ENCODE measurements at regions of chr19 and their contacts with region 1.

Region 1: GRCh38 chr19:33373701-33374421 is at the start of gene CEBPG:
- DNase-seq: peak in 1 of 2 donors; percentile 67
- ATAC-seq: peak; percentile 68 to 73
- H3K4me3 ChIP-seq: peak within 1 kb of the TSS; percentile 63 to 88 (median 72)
- H3K27ac ChIP-seq: peak within 1 kb of the TSS; percentile 89 to 99 (median 94)
- H3K4me1 ChIP-seq: peaks cover 40 to 41% of the 10 kb centered on the region in 2 donors
- H3K27me3 ChIP-seq: no peaks in the 10 kb centered on the region
- CTCF ChIP-seq: peak; percentile 35 to 54 (median 51)
- POLR2A ChIP-seq: peak; percentile 93 to 94
- total RNA-seq, gene CEBPG: 44.2 to 50.1 (median 46.1) TPM

Region 2: GRCh38 chr19:33176670-33177416 is 197.0 kb before region 1 on chr19:
- in situ Hi-C with region 1: no loop called
- intact Hi-C with region 1: loop called (anchors 1 kb)
- DNase-seq: peak; percentile 89 to 96
- ATAC-seq: peak; percentile 96 to 97
- H3K4me3 ChIP-seq: peak overlapping the region; percentile 77 to 100 (median 84)
- H3K27ac ChIP-seq: peak overlapping the region; percentile 89 to 97 (median 92)
- H3K4me1 ChIP-seq: peaks cover 17 to 29% of the 10 kb centered on the region in 2 donors
- H3K27me3 ChIP-seq: no peaks in the 10 kb centered on the region
- CTCF ChIP-seq: peak; percentile 25 to 45 (median 32)
- POLR2A ChIP-seq: peak; percentile 77 to 79

Region 3: DNA sequence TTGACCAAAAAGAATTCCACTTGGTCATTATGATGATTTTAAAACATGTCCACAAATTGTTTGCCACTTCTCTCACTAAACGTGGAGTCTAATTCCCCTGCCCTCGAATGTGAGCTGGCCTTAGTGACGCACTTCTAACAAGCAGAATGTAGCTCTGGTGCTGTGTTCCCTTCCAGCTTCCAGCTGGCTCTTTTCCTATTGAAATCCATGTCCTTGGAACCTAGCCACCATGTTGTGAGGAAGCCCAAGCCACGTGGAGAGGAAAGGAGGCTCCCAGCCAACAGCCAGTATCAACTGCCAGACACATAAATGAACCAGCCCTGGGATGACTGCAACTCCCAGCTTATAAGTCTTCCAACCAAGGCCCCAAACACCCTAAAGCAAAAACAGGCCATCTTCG is 47.9 kb before region 1 on chr19:
- in situ Hi-C with region 1: no loop called
- intact Hi-C with region 1: loop called (anchors 2 kb)
- DNase-seq: peak; percentile 79 to 94
- ATAC-seq: peak; percentile 99
- H3K4me3 ChIP-seq: no peak overlapping the region
- H3K27ac ChIP-seq: peak overlapping the region; percentile 75 to 84 (median 79)
- H3K4me1 ChIP-seq: peaks cover 12 to 27% of the 10 kb centered on the region in 2 donors
- H3K27me3 ChIP-seq: no peaks in the 10 kb centered on the region
- CTCF ChIP-seq: no peak
- POLR2A ChIP-seq: no peak

Region 4: GRCh38 chr19:33350538-33351309 is 23.1 kb before region 1 on chr19:
- in situ Hi-C with region 1: no loop called
- intact Hi-C with region 1: no loop called
- DNase-seq: peak in 1 of 2 donors; percentile 64
- ATAC-seq: peak; percentile 50 to 84
- H3K4me3 ChIP-seq: no peak overlapping the region
- H3K27ac ChIP-seq: no peak overlapping the region
- H3K4me1 ChIP-seq: no peaks in the 10 kb centered on the region
- H3K27me3 ChIP-seq: peaks cover 0 to 4% (median 0%) of the 10 kb centered on the region in 3 donors
- CTCF ChIP-seq: no peak
- POLR2A ChIP-seq: no peak

Region 5: DNA sequence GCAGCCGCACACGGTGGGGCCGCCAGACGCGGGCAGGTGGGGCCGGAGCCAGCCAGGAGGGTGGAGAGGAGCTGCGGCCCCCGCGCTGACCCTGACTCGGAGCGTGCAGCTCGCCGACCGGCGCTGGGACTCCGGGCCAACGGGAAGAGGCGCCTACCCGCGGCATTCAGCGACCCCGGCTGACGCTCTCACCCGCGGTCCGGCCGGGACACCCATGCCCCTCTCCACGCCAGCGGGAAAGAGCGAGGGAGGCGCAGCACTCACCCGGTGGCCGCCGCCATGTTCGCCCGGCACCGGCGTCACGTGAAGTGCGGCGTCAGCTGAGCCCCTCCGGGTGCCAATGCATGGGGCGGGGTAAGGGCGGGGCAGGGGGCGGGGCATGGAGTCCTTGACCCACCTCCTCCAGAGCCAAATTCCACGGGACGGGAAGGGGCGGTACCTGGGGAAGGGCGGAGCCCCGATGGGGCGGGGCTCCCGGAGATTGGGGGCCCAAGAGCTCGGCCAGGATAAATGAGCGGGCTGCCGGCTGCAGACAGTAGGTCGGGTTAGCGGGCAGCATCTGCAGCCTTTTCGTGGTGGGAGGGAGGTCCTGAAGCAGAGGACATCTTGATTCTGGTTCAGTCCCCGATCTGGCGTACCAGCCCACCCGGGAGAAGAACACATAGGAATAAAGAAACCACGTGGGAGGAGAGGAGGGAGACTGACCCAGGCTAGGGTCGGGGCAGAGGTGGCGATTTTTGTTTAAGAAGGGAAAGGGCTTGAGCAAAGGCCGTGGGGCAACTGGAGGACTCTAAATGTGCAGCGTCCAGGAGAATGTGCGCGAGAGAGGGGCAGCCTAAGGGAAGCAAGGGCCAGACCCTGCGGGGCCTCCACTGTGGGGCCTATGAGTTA is 147.9 kb after region 1 on chr19 and contains the start of gene PEPD:
- in situ Hi-C with region 1: no loop called
- intact Hi-C with region 1: loop called (anchors 5 kb)
- DNase-seq: peak; percentile 82 to 87
- ATAC-seq: peak; percentile 97 to 98
- H3K4me3 ChIP-seq: peak within 1 kb of the TSS; percentile 72 to 99 (median 83)
- H3K27ac ChIP-seq: peak within 1 kb of the TSS; percentile 66 to 79 (median 78)
- H3K4me1 ChIP-seq: peaks cover 9 to 18% of the 10 kb centered on the region in 2 donors
- H3K27me3 ChIP-seq: no peaks in the 10 kb centered on the region
- CTCF ChIP-seq: no peak
- POLR2A ChIP-seq: peak; percentile 78 to 85
- total RNA-seq, gene PEPD: 33.9 to 57.0 (median 45.0) TPM